Endothelial cell of umbilical vein (primary cell): ENCODE measurements at regions of chr12 and their contacts with region 1.

Region 1: GRCh38 chr12:10069099-10069498 is 29.7 kb downstream of the CLEC1A start:
- DNase-seq: peak; percentile 94
- H3K4me3 ChIP-seq: no peak overlapping the region
- H3K27ac ChIP-seq: peak overlapping the region; percentile 98
- H3K4me1 ChIP-seq: peaks cover 44% of the 10 kb centered on the region
- H3K27me3 ChIP-seq: no peaks in the 10 kb centered on the region
- CTCF ChIP-seq: no peak
- POLR2A ChIP-seq: peak; percentile 25

Region 2: DNA sequence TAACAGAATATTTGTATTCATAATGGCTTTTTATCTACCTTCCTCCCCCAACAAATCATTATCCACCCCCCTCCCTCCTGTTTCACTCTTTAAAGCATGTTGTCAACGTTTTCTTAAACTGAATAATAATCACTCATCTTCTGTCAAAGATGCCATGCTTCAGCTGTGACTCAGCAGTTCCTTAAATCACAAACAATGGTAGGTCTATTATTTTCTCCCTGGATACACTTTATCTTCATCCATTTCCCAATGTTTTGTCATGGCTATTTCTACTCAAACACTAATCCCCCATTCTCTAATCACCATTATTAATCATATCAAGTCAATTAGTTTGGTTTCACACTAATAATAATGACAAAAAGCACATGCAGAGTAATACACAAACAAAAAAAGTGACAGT is 52.2 kb before region 1 on chr12:
- CTCF ChIA-PET with region 1: interaction called, 9 read pairs
- POLR2A ChIA-PET with region 1: no interaction called
- dilution Hi-C with region 1: no loop called
- intact Hi-C with region 1: loop called (anchors 1 kb)
- DNase-seq: peak; percentile 86
- H3K4me3 ChIP-seq: no peak overlapping the region
- H3K27ac ChIP-seq: peak overlapping the region; percentile 99
- H3K4me1 ChIP-seq: peaks cover 27% of the 10 kb centered on the region
- H3K27me3 ChIP-seq: no peaks in the 10 kb centered on the region
- CTCF ChIP-seq: no peak
- POLR2A ChIP-seq: no peak

Region 3: GRCh38 chr12:10052193-10052913 is 16.7 kb before region 1 on chr12:
- CTCF ChIA-PET with region 1: interaction called, 10 read pairs
- POLR2A ChIA-PET with region 1: no interaction called
- dilution Hi-C with region 1: no loop called
- intact Hi-C with region 1: no loop called
- DNase-seq: no peak
- H3K4me3 ChIP-seq: no peak overlapping the region
- H3K27ac ChIP-seq: no peak overlapping the region
- H3K4me1 ChIP-seq: no peaks in the 10 kb centered on the region
- H3K27me3 ChIP-seq: no peaks in the 10 kb centered on the region
- CTCF ChIP-seq: no peak
- POLR2A ChIP-seq: no peak

Region 4: DNA sequence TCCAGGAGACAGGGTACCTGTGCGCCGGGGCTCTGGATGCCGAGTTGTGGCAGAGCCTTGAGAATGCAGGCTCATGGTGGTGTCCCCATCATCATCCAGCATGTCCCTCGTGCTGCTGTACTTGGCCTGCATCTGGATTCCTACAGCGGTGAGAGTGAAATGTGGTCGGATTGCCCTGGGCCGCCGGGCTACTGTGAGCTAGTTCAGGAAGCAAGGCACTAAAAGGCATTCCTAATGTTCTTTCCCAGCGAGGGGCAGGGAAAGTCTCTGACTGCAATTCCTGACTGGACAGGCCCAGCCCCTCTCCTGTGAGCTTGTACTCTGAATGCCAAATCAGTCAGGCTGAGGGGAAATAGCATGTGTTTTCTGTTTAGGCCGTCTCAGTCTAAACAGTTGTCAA is 29.7 kb after region 1 on chr12 and contains the start of gene CLEC1A:
- CTCF ChIA-PET with region 1: interaction called, 22 read pairs
- POLR2A ChIA-PET with region 1: interaction called, 7 read pairs
- dilution Hi-C with region 1: no loop called
- intact Hi-C with region 1: loop called (anchors 1 kb)
- DNase-seq: peak; percentile 82
- H3K4me3 ChIP-seq: peak within 1 kb of the TSS; percentile 38 to 63 (median 43)
- H3K27ac ChIP-seq: peak within 1 kb of the TSS; percentile 75
- H3K4me1 ChIP-seq: peaks cover 7% of the 10 kb centered on the region
- H3K27me3 ChIP-seq: no peaks in the 10 kb centered on the region
- CTCF ChIP-seq: no peak
- POLR2A ChIP-seq: peak; percentile 50
- total RNA-seq, gene CLEC1A: 22.5 and 24.2 TPM in 2 replicates